CD8-positive, alpha-beta memory T cell (primary cell): ENCODE measurements at regions of chr17 and their contacts with region 1.

Region 1: GRCh38 chr17:73231841-73232586 is 29.7 kb downstream of the CPSF4L start:
- DNase-seq: peak; percentile 94 to 97 (median 95)
- H3K4me3 ChIP-seq: peak overlapping the region; percentile 87
- H3K4me3 Mint-ChIP-seq: peak overlapping the region; percentile 95 to 97 (median 96)
- H3K27ac ChIP-seq: peak overlapping the region; percentile 80
- H3K27ac Mint-ChIP-seq: peak overlapping the region; percentile 82 to 99 (median 97)
- H3K4me1 ChIP-seq: peaks cover 53% of the 10 kb centered on the region
- H3K4me1 Mint-ChIP-seq: peaks cover 62 to 83% (median 73%) of the 10 kb centered on the region in 3 donors
- H3K27me3 ChIP-seq: no peaks in the 10 kb centered on the region
- H3K27me3 Mint-ChIP-seq: no peaks in the 10 kb centered on the region

Region 2: DNA sequence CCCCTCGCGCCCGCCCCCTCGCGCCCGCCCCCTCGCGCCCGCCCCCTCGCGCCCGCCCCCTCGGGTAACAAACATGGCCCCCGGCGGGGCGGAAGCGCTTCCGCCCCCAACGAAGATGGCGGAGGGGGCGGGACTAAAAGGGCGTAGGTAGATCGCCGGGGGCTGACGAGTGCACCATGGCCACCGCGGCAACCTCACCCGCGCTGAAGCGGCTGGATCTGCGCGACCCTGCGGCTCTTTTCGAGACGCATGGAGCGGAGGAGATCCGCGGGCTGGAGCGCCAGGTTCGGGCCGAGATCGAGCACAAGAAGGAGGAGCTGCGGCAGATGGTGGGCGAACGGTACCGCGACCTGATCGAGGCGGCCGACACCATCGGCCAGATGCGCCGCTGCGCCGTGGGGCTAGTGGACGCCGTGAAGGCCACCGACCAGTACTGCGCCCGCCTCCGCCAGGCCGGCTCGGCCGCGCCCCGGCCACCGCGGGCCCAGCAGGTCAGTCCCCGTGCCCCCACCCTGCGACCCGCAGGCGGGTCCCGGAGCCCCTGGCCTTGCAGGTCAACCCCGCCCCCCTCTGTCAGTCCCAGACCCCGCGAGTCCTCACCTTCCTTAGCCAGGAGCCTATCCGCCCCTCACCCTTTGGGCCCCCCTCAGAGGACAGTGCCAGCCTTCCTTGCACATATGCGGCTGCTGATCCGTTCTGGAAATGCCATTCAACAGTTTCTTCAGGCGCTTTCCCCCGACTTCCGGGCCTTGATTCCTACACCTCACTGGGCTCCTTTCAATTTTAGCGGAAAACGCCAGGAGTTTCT is 38.9 kb before region 1 on chr17 and contains the start of gene COG1:
- CTCF ChIA-PET with region 1: interaction called, 7 read pairs
- POLR2A ChIA-PET with region 1: interaction called, 14 read pairs
- DNase-seq: peak; percentile 73 to 92 (median 78)
- H3K4me3 ChIP-seq: peak within 1 kb of the TSS; percentile 87
- H3K4me3 Mint-ChIP-seq: peak within 1 kb of the TSS; percentile 91 to 99 (median 98)
- H3K27ac ChIP-seq: peak within 1 kb of the TSS; percentile 95
- H3K27ac Mint-ChIP-seq: peak within 1 kb of the TSS; percentile 92 to 98 (median 97)
- H3K4me1 ChIP-seq: peaks cover 16% of the 10 kb centered on the region
- H3K4me1 Mint-ChIP-seq: peaks cover 26 to 46% (median 34%) of the 10 kb centered on the region in 3 donors
- H3K27me3 ChIP-seq: no peaks in the 10 kb centered on the region
- H3K27me3 Mint-ChIP-seq: no peaks in the 10 kb centered on the region
- total RNA-seq, gene COG1: 24.6 to 26.5 TPM

Region 3: DNA sequence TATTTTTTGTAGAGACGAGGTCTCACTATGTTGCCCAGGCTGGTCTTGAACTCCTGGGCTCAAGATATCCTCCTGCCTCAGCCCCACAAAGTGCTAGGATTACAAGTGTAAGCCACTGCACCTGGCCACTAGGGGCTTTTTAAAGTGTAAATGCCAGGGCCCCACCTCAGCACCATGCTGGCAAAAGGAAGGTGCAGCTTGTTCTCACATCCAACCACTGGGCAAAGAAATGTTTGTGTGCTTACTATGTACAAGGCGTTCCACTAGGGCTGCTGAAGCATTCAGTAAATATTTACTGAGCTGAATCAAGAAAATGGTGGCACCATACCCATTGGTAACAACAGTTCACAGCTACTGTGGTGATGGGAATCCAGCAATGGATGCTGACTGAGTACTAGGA is 16.6 kb before region 1 on chr17:
- CTCF ChIA-PET with region 1: interaction called, 14 read pairs
- POLR2A ChIA-PET with region 1: interaction called, 12 read pairs
- DNase-seq: no peak
- H3K4me3 ChIP-seq: no peak overlapping the region
- H3K4me3 Mint-ChIP-seq: no peak overlapping the region
- H3K27ac ChIP-seq: no peak overlapping the region
- H3K27ac Mint-ChIP-seq: peak overlapping the region in 6 of 8 donors; percentile 12 to 77 (median 65)
- H3K4me1 ChIP-seq: peaks cover 16% of the 10 kb centered on the region
- H3K4me1 Mint-ChIP-seq: peaks cover 32 to 53% (median 42%) of the 10 kb centered on the region in 3 donors
- H3K27me3 ChIP-seq: no peaks in the 10 kb centered on the region
- H3K27me3 Mint-ChIP-seq: no peaks in the 10 kb centered on the region